ENCODE measurements at regions of chr5 and their contacts with region 1.

Region 1: GRCh38 chr5:135560858-135561257 is 17.9 kb downstream of the CXCL14 start:
- DNase-seq: peak in 1 of 2 experiments; percentile 92
- H3K4me3 ChIP-seq: 0 out of 8 replicates have a peak overlapping the region, but pooled peaks of 1 of the 4 experiments have one; percentile 15
- H3K27ac ChIP-seq: no peak overlapping the region
- H3K4me1 ChIP-seq: peaks cover 0 to 21% (median 8%) of the 10 kb centered on the region in 4 experiments; a peak in 6 of 7 replicates
- H3K27me3 ChIP-seq: no peaks in the 10 kb centered on the region; a peak in 1 of 7 replicates
- CTCF ChIP-seq: peak; percentile 91 to 92 (median 91)
- EP300 ChIP-seq: no peak
- POLR2A ChIP-seq: no peak
- RAD21 ChIP-seq: peak; percentile 95 to 96

Region 2: GRCh38 chr5:134989266-134989830 is 571.5 kb before region 1 on chr5:
- CTCF ChIA-PET with region 1: no interaction called
- POLR2A ChIA-PET with region 1: no interaction called
- DNase-seq: no peak
- H3K4me3 ChIP-seq: no peak overlapping the region
- H3K27ac ChIP-seq: no peak overlapping the region
- H3K4me1 ChIP-seq: peaks cover 0 to 9% (median 6%) of the 10 kb centered on the region in 4 experiments; a peak in 4 of 7 replicates
- H3K27me3 ChIP-seq: no peaks in the 10 kb centered on the region
- CTCF ChIP-seq: no peak
- EP300 ChIP-seq: no peak
- POLR2A ChIP-seq: no peak
- RAD21 ChIP-seq: no peak

Region 3: DNA sequence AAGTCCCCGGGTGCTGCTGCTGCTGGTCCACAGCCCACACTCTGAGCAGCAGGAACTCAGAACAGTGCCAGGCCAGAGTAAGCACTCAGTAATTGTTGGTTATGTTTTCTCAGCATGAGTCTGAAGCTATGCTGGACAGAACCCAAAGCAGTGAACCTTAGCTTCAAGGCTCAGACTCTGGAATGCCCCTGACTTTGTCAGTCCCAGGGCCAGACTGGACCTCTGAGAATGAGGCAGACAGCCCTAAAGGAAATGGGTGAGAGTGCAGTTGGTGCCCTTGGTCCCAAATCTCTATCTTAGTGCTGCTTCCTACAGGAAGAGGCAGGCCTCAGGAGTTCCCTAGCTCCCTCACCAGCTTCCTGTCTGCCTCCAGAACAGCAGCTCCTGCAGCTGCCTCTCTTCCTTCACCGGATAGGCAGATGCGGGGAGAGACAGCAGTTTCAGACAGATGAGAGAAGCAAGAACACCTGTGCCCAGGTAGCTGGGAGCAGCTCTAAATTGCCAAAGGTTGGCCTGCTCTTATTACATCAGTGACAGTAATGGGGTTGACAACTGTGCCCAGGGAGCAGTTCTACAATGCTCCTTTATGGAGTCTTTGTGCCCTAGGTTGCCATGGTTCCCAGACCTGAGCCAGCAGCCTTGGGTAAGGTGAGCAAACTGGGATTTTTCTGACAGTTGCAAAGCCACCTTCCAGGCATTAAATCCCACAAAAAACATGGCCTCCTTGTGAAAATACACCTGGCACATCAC is 100.1 kb after region 1 on chr5:
- CTCF ChIA-PET with region 1: interaction called, 12 read pairs
- POLR2A ChIA-PET with region 1: no interaction called
- DNase-seq: no peak
- H3K4me3 ChIP-seq: no peak overlapping the region
- H3K27ac ChIP-seq: no peak overlapping the region
- H3K4me1 ChIP-seq: peaks cover 0 to 5% (median 0%) of the 10 kb centered on the region in 4 experiments; a peak in 2 of 7 replicates
- H3K27me3 ChIP-seq: no peaks in the 10 kb centered on the region
- CTCF ChIP-seq: no peak
- EP300 ChIP-seq: no peak
- POLR2A ChIP-seq: no peak
- RAD21 ChIP-seq: no peak

Region 4: GRCh38 chr5:135723491-135723890 is 162.6 kb after region 1 on chr5:
- CTCF ChIA-PET with region 1: interaction called, 218 read pairs
- POLR2A ChIA-PET with region 1: interaction called, 3 read pairs
- DNase-seq: no peak
- H3K4me3 ChIP-seq: no peak overlapping the region
- H3K27ac ChIP-seq: no peak overlapping the region
- H3K4me1 ChIP-seq: no peaks in the 10 kb centered on the region; a peak in 1 of 7 replicates
- H3K27me3 ChIP-seq: no peaks in the 10 kb centered on the region; a peak in 1 of 7 replicates
- CTCF ChIP-seq: no peak
- EP300 ChIP-seq: no peak
- POLR2A ChIP-seq: no peak
- RAD21 ChIP-seq: no peak

Region 5: DNA sequence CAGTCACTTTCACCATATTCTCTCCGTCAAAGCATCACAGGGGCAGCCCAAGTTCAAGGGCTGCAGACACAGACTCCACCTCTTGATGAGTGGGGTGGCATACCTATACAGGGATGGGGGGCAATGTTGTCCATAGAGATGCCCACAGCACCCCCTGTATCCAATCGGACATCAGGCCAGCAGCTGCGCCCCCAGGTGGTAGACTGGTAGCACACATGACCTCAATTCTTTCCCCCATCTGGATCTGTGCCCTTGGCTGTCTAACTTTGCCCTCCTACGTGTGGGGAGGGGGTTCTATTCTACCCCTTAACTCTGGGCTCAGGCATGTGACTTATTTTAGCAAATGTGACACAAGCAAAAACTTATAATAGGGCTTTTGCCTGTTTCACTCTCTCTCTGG is 189.6 kb after region 1 on chr5:
- CTCF ChIA-PET with region 1: interaction called, 10 read pairs
- POLR2A ChIA-PET with region 1: no interaction called
- DNase-seq: no peak
- H3K4me3 ChIP-seq: no peak overlapping the region
- H3K27ac ChIP-seq: no peak overlapping the region
- H3K4me1 ChIP-seq: no peaks in the 10 kb centered on the region
- H3K27me3 ChIP-seq: no peaks in the 10 kb centered on the region
- CTCF ChIP-seq: peak; percentile 59 to 71 (median 64)
- EP300 ChIP-seq: no peak
- POLR2A ChIP-seq: no peak
- RAD21 ChIP-seq: peak; percentile 18 to 40; a peak in 2 of 4 replicates

Measured in H1 (cell line).